AG04449 (cell line): ENCODE measurements at regions of chr7 and their contacts with region 1.

Region 1: GRCh38 chr7:64098-64915 is 128.1 kb upstream of the FAM20C start:
- DNase-seq: no peak
- H3K4me3 ChIP-seq: no peak overlapping the region
- CTCF ChIP-seq: peak; percentile 79

Region 2: GRCh38 chr7:41917-42565 is 22.3 kb before region 1 on chr7:
- CTCF ChIA-PET with region 1: no interaction called
- POLR2A ChIA-PET with region 1: no interaction called
- DNase-seq: no peak
- H3K4me3 ChIP-seq: no peak overlapping the region
- CTCF ChIP-seq: no peak

Region 3: DNA sequence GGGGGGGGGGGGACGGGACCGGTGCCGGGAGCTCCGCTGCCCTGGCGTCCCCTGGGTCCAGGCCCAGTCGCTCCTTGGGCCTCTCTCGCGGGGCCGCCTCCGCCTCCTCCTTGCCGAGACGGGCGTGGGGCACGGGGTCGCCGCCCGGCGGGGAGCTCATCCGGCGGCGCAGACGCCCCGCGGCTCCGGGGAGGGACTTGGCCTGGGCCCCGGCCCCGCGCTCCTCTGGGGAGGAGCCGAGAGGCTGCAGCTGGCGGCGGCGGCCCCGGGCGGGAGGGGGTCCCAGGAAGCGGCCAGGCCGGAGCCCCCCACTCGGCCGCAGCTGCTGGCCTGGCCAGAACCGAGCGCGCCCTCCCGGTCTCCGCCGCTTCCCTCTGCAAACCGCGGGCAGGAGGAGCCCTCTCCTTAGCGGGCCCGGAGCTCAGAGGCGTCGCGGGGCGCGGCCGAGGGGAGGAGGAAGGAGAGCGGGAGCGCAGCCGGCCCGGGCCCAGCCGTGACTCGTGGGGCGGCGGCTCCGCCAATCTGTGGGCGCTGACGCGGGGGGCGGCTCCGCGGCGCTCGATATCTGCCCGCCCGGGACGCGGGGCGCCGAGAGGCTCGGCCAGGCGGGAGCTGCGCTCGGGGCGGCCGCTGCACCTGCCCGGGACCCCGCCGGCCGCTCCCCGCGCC is 127.8 kb after region 1 on chr7 and contains the start of gene FAM20C:
- CTCF ChIA-PET with region 1: interaction called, 14 read pairs
- POLR2A ChIA-PET with region 1: interaction called, 5 read pairs
- DNase-seq: no peak
- H3K4me3 ChIP-seq: peak within 1 kb of the TSS; percentile 68
- CTCF ChIP-seq: no peak

Region 4: GRCh38 chr7:674454-675410 is 610.4 kb after region 1 on chr7:
- CTCF ChIA-PET with region 1: no interaction called
- POLR2A ChIA-PET with region 1: no interaction called
- DNase-seq: no peak
- H3K4me3 ChIP-seq: no peak overlapping the region
- CTCF ChIP-seq: no peak